Spleen (tissue), 13 donors: ENCODE measurements at regions of chr3 and their contacts with region 1.

Region 1: GRCh38 chr3:39415983-39416382 is 9.5 kb downstream of the RPSA start:
- DNase-seq: no peak
- H3K4me3 ChIP-seq: no peak overlapping the region
- H3K27ac ChIP-seq: no peak overlapping the region
- H3K4me1 ChIP-seq: peaks cover 0 to 13% (median 2%) of the 10 kb centered on the region in 6 donors
- H3K27me3 ChIP-seq: no peaks in the 10 kb centered on the region
- CTCF ChIP-seq: no peak
- POLR2A ChIP-seq: no peak

Region 2: GRCh38 chr3:39378088-39378487 is 37.9 kb before region 1 on chr3:
- intact Hi-C with region 1: no loop called
- DNase-seq: no peak
- H3K4me3 ChIP-seq: no peak overlapping the region
- H3K27ac ChIP-seq: no peak overlapping the region
- H3K4me1 ChIP-seq: peaks cover 0 to 15% (median 6%) of the 10 kb centered on the region in 6 donors
- H3K27me3 ChIP-seq: no peaks in the 10 kb centered on the region
- CTCF ChIP-seq: peak; percentile 7 to 68 (median 49)
- POLR2A ChIP-seq: no peak

Region 3: DNA sequence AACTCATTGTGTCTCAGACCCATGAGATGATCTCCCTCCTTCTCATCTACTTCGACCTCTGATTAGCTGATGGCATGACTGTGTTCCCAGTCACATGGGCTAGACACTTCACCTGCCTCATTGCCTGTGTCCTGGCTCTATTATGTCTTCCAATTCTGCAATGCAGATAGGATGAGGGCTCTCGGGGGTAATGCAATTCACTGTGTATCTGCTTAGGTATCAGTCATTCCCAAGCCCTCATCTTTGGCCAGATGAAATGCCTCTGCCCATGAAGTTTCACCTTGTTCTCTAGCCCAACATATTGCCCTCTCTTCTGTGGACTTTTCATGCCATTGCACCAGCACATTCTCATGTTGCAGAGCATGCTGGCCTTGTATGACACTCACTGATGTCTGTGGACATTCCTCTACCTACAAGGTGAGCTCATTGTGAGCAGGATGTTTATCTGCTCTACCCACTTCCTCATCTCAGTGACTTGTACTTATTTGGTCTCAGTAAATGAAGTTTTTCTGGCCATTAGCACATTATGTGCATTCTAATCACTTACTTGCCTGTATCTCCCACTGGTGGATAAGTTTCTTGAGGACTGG is 83.8 kb after region 1 on chr3:
- intact Hi-C with region 1: loop called (anchors 5 kb)
- DNase-seq: no peak
- H3K4me3 ChIP-seq: no peak overlapping the region
- H3K27ac ChIP-seq: no peak overlapping the region
- H3K4me1 ChIP-seq: peaks cover 0 to 11% (median 0%) of the 10 kb centered on the region in 6 donors
- H3K27me3 ChIP-seq: peaks cover 0 to 64% (median 25%) of the 10 kb centered on the region in 7 donors
- CTCF ChIP-seq: no peak
- POLR2A ChIP-seq: no peak

Region 4: GRCh38 chr3:40042752-40043443 is 626.9 kb after region 1 on chr3:
- intact Hi-C with region 1: no loop called
- DNase-seq: no peak
- H3K4me3 ChIP-seq: no peak overlapping the region
- H3K27ac ChIP-seq: no peak overlapping the region
- H3K4me1 ChIP-seq: no peaks in the 10 kb centered on the region
- H3K27me3 ChIP-seq: no peaks in the 10 kb centered on the region
- CTCF ChIP-seq: no peak
- POLR2A ChIP-seq: no peak